Cardiac septum (tissue), 1 donor: ENCODE measurements at regions of chrX and their contacts with region 1.

Region 1: GRCh38 chrX:20266810-20267606 is at the start of gene RPS6KA3:
- DNase-seq: peak; percentile 97
- total RNA-seq, gene RPS6KA3: 40.4 TPM

Region 2: DNA sequence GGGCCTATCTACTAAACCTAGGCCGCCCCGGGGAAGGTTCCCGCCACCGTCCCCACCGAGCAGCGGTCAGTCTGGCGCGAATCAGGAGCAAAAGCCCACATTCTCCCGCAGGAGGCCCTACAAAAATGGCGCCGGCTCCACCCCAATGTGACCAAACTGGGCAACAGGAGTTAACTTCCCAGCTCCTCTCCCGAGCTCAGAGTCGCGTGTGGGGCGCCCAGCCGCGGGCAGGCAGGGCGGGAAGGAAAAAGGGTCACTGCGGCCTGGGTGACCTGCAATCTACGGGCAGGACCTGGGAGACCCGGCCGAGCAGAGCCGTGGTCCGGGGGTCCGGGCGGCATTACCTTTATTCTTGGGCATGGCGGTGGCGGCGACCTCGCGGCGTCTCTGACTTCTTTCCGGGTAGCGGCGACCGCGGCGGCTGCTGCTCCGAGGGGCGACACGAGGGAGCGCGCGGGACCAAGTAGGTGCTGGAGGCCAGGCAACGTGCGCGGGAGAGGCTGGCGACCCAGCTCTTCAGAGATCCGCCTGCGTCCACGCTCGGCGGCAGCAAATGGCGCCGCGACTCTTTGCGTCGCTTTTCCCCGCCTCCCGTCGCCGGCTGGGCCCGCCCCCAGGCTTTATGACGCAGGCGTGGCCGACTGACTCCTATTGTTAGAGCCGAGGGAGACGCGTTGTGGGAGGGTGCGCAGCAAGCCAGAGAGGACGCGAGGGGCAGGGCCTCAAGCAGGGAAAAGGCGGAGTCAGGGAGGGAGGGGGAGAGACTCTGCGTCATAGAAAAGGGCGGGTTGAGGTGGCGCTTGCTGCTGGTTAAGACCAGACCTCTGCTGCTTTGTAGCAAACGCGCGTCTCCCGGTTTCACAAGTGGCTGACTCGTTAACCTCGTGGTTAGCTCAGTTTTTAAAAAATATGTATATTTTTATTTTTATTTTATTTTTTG is 125.5 kb before region 1 on chrX and contains the start of gene EIF1AX:
- intact Hi-C with region 1: loop called (anchors 2 kb)
- DNase-seq: peak; percentile 100
- total RNA-seq, gene EIF1AX: 75.4 TPM

Region 3: DNA sequence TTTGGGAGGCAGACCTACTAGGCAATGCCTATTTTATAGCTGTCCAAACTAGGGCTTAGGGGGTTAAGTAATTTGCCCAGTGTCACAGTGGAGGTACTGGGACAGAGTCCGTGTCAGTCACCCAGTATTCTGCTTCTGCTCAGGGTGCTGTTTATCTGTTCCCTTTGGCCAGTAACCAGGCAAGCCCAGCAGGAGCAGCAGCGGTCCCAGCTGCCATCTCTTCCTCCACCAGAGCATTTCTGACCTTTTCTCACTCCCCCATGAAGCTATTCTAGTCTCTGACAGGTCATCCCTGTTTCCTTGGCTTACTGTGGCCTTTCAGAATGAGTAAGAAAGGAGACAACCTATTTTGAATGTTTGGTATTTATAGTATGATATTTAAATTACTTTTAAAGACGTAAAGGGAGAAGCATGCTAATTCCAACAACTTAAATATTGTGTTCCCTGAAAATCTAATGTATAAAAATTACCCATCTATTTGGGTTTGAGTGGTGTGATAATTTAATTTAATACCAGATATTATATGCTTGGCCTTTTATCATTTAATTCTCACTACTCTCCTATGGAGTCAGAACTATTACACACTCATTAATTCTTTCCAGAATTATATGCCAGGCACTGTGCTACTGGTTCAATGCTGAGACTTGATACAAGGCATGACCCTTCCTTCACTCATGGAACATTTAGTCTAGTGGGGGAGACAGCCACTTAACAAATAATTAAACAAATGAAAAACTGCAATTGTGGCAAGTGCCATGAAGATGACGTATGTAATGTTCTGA is 60.9 kb before region 1 on chrX:
- intact Hi-C with region 1: loop called (anchors 5 kb)
- DNase-seq: no peak

Region 4: GRCh38 chrX:20362268-20363267 is 95.6 kb after region 1 on chrX:
- intact Hi-C with region 1: loop called (anchors 5 kb)
- DNase-seq: no peak